IMR-90 (cell line): ENCODE measurements at regions of chr10 and their contacts with region 1.

Region 1: GRCh38 chr10:131981429-131982184 is at the start of gene BNIP3:
- DNase-seq: peak; percentile 94
- ATAC-seq: peak; percentile 83
- H3K4me3 ChIP-seq: peak within 1 kb of the TSS; percentile 99
- H3K27ac ChIP-seq: peak within 1 kb of the TSS; percentile 85
- H3K4me1 ChIP-seq: peaks cover 13% of the 10 kb centered on the region
- H3K27me3 ChIP-seq: no peaks in the 10 kb centered on the region
- CTCF ChIP-seq: no peak
- POLR2A ChIP-seq: peak; percentile 99
- RAD21 ChIP-seq: no peak
- total RNA-seq, gene BNIP3: 134 and 252 TPM in 2 replicates

Region 2: GRCh38 chr10:131885391-131886161 is 96.0 kb before region 1 on chr10:
- CTCF ChIA-PET with region 1: interaction called, 3 read pairs
- POLR2A ChIA-PET with region 1: no interaction called
- dilution Hi-C with region 1: no loop called
- in situ Hi-C with region 1: no loop called
- intact Hi-C with region 1: loop called (anchors 1 kb)
- DNase-seq: peak; percentile 39
- ATAC-seq: peak; percentile 100
- H3K4me3 ChIP-seq: no peak overlapping the region
- H3K27ac ChIP-seq: no peak overlapping the region
- H3K4me1 ChIP-seq: no peaks in the 10 kb centered on the region
- H3K27me3 ChIP-seq: peaks cover 9% of the 10 kb centered on the region; the same call in 1 of the 2 replicates
- CTCF ChIP-seq: peak; percentile 95
- POLR2A ChIP-seq: no peak
- RAD21 ChIP-seq: peak; percentile 94

Region 3: DNA sequence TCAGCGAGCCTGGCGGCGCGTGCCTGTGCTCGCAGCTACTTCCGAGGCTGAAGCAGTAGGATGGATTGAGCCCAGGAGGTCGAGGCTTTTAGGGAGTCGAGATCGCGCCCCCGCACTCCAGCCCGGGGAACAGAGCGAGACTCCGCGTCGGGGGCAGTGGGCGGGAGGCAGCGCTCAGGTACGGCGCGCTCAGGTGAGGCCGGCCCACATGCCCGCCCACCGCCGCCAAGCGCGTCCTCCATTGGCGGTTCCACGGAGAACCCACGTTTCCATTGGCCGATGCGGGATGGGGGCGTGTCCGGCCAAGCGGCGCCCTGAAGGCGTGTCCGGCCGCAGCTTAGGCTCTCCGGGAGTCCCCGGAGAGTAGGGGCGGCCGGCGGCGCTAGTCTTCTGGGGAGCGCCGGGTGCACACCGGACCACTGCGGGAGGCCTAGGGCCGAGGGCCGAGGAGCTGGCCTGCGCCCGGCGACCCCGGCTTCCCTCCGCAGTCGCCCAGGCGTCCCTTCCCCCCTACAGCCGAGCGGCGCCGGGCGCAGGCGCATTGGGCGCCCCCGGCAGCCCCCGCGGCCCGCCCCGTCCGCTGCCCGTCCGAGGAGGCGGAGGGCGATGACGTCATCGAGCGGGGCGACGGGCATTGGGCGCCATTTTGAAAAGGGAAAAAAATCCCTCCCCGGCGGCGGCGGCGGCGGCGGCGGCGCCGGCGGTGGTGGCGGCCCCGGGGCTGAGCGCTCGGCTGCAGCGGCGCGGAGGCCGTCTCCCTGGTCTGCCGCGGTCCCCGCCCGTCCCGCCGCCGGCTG is 81.1 kb before region 1 on chr10 and contains the start of gene PPP2R2D:
- CTCF ChIA-PET with region 1: no interaction called
- POLR2A ChIA-PET with region 1: no interaction called
- dilution Hi-C with region 1: no loop called
- in situ Hi-C with region 1: no loop called
- intact Hi-C with region 1: loop called (anchors 5 kb)
- DNase-seq: peak; percentile 83
- ATAC-seq: peak; percentile 95
- H3K4me3 ChIP-seq: peak within 1 kb of the TSS; percentile 65
- H3K27ac ChIP-seq: peak within 1 kb of the TSS; percentile 76
- H3K4me1 ChIP-seq: peaks cover 10% of the 10 kb centered on the region
- H3K27me3 ChIP-seq: peaks cover 25% of the 10 kb centered on the region
- CTCF ChIP-seq: no peak
- POLR2A ChIP-seq: no peak
- RAD21 ChIP-seq: no peak
- total RNA-seq, gene PPP2R2D: 21.1 and 23.8 TPM in 2 replicates

Region 4: GRCh38 chr10:131947631-131948347 is 33.8 kb before region 1 on chr10:
- CTCF ChIA-PET with region 1: no interaction called
- POLR2A ChIA-PET with region 1: no interaction called
- dilution Hi-C with region 1: no loop called
- in situ Hi-C with region 1: no loop called
- intact Hi-C with region 1: loop called (anchors 2 kb)
- DNase-seq: peak; percentile 78
- ATAC-seq: peak; percentile 83
- H3K4me3 ChIP-seq: no peak overlapping the region
- H3K27ac ChIP-seq: peak overlapping the region; percentile 64
- H3K4me1 ChIP-seq: peaks cover 21% of the 10 kb centered on the region
- H3K27me3 ChIP-seq: no peaks in the 10 kb centered on the region
- CTCF ChIP-seq: no peak
- POLR2A ChIP-seq: no peak
- RAD21 ChIP-seq: no peak

Region 5: GRCh38 chr10:131997366-131998049 is 15.9 kb after region 1 on chr10:
- CTCF ChIA-PET with region 1: interaction called, 4 read pairs
- POLR2A ChIA-PET with region 1: no interaction called
- dilution Hi-C with region 1: no loop called
- in situ Hi-C with region 1: no loop called
- intact Hi-C with region 1: loop called (anchors 1 kb)
- DNase-seq: peak; percentile 90
- ATAC-seq: peak; percentile 95
- H3K4me3 ChIP-seq: no peak overlapping the region
- H3K27ac ChIP-seq: peak overlapping the region; percentile 51; the same call in 1 of the 2 replicates
- H3K4me1 ChIP-seq: peaks cover 18% of the 10 kb centered on the region
- H3K27me3 ChIP-seq: peaks cover 2% of the 10 kb centered on the region; the same call in 1 of the 2 replicates
- CTCF ChIP-seq: no peak
- POLR2A ChIP-seq: no peak
- RAD21 ChIP-seq: peak; percentile 23

Region 6: DNA sequence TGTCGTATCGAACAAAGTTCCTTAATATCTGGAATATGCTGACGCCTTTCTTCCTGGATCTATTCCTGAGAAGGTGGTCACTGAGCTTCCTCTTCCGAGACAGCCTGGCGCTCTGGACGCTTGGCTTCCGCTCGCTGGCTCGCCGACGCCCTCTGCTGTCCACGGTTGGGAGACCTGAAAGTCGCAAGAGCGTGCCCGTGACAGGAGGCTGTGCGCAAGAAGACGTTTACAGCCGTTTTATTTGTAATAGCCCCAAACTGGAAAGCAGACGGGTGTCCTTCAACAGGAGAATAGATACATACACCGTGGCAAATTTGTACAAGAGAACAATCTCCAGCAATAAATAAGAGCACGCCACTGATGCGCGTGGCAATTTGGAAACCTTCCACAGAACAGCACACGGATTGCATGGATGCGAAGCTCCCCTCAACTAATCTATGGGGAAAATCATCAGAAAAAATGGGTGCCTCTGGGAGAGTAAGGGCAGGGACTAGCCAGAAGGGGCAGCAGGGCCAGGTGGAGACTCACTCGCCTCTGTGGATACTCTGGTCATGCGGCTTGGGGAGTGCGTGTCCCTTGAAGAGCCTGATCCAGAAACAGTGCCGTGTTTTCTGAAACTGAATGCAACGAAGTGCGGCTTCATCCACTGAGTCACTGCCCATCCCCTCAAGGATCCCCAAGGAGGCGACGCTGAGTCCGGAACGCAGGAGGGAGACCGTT is 41.6 kb after region 1 on chr10:
- CTCF ChIA-PET with region 1: interaction called, 11 read pairs
- POLR2A ChIA-PET with region 1: no interaction called
- dilution Hi-C with region 1: no loop called
- in situ Hi-C with region 1: no loop called
- intact Hi-C with region 1: loop called (anchors 1 kb)
- DNase-seq: peak; percentile 72
- ATAC-seq: peak; percentile 98
- H3K4me3 ChIP-seq: 0 out of 2 replicates have a peak overlapping the region, but pooled peaks have one; percentile 2
- H3K27ac ChIP-seq: no peak overlapping the region
- H3K4me1 ChIP-seq: no peaks in the 10 kb centered on the region
- H3K27me3 ChIP-seq: peaks cover 29% of the 10 kb centered on the region
- CTCF ChIP-seq: peak; percentile 94
- POLR2A ChIP-seq: no peak
- RAD21 ChIP-seq: peak; percentile 95

Region 7: GRCh38 chr10:132065491-132066105 is 84.0 kb after region 1 on chr10 and contains the start of gene JAKMIP3:
- CTCF ChIA-PET with region 1: no interaction called
- POLR2A ChIA-PET with region 1: no interaction called
- dilution Hi-C with region 1: no loop called
- in situ Hi-C with region 1: no loop called
- intact Hi-C with region 1: loop called (anchors 5 kb)
- DNase-seq: peak; percentile 96
- ATAC-seq: peak; percentile 96
- H3K4me3 ChIP-seq: peak within 1 kb of the TSS; percentile 61
- H3K27ac ChIP-seq: peak within 1 kb of the TSS; percentile 84
- H3K4me1 ChIP-seq: peaks cover 6% of the 10 kb centered on the region; the same call in 1 of the 2 replicates
- H3K27me3 ChIP-seq: peaks cover 13% of the 10 kb centered on the region; the same call in 1 of the 2 replicates
- CTCF ChIP-seq: no peak
- POLR2A ChIP-seq: no peak
- RAD21 ChIP-seq: no peak
- total RNA-seq, gene JAKMIP3: under 0.01 TPM in 2 replicates

Region 8: DNA sequence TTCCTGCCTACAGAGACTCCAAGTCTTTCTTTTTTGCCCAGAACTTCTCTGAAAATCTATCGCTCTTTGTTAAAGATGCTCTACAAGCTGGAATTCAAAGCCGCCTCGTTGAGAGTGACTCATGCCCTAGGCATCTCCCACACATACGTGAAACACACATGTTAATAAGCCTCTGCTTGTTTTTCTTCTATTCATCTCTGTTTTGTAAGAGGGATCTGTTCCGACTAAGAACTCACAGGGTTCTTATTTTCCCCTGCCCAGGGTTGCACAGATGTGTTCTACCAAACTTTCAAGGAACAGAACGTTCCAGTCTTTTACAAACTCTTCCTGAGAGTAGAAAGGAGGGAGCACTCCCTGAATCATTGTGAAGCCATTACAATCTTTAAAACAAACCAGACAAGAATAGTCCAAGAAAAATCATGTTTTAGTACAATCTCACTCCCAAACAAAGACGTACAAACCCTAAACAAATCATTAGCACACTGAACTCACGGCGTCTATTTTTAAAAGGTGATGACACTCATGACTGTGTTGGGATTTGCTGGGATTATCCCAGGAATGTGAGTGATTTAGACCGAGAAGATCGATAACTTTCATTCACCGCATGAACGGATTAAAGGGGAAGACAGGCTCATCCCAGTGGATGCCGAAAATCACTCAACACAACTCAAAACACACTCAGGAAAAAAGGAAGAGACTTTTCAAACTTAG is 500.6 kb after region 1 on chr10:
- CTCF ChIA-PET with region 1: no interaction called
- POLR2A ChIA-PET with region 1: no interaction called
- dilution Hi-C with region 1: no loop called
- in situ Hi-C with region 1: no loop called
- intact Hi-C with region 1: no loop called
- DNase-seq: peak; percentile 91
- ATAC-seq: peak; percentile 85
- H3K4me3 ChIP-seq: no peak overlapping the region
- H3K27ac ChIP-seq: peak overlapping the region; percentile 13; the same call in 1 of the 2 replicates
- H3K4me1 ChIP-seq: peaks cover 7% of the 10 kb centered on the region
- H3K27me3 ChIP-seq: no peaks in the 10 kb centered on the region; the same call in 1 of the 2 replicates
- CTCF ChIP-seq: no peak
- POLR2A ChIP-seq: no peak
- RAD21 ChIP-seq: no peak